ENCODE measurements at regions of chr19 and their contacts with region 1.

Region 1: GRCh38 chr19:41136636-41137455 is 22.6 kb downstream of the CYP2F1 start:
- DNase-seq: no peak
- H3K4me3 ChIP-seq: no peak overlapping the region
- H3K4me3 Mint-ChIP-seq: peak overlapping the region; percentile 55 to 95 (median 80)
- H3K27ac ChIP-seq: no peak overlapping the region
- H3K27ac Mint-ChIP-seq: peak overlapping the region in 1 of 8 donors; percentile 61
- H3K4me1 ChIP-seq: peaks cover 8% of the 10 kb centered on the region
- H3K4me1 Mint-ChIP-seq: peaks cover 8 to 21% (median 19%) of the 10 kb centered on the region in 3 donors
- H3K27me3 ChIP-seq: no peaks in the 10 kb centered on the region
- H3K27me3 Mint-ChIP-seq: peaks cover 0 to 5% of the 10 kb centered on the region in 2 donors

Region 2: DNA sequence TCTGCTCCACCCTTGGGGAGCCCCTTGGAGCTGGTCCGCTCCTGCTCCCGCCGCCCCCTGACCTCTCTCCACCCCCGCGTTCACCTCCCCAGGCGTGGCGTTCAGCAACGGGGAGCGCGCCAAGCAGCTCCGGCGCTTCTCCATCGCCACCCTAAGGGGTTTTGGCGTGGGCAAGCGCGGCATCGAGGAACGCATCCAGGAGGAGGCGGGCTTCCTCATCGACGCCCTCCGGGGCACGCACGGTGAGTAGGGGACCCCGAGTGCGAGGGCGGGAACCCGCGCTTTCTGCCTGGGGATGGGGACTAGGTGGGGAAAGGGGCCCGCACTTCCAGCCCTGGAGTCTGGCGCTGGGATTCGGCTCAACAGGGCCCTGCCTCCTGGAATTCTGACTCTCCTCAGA is 46.9 kb before region 1 on chr19:
- CTCF ChIA-PET with region 1: no interaction called
- POLR2A ChIA-PET with region 1: no interaction called
- DNase-seq: peak in 1 of 5 donors; percentile 9
- H3K4me3 ChIP-seq: no peak overlapping the region
- H3K4me3 Mint-ChIP-seq: peak overlapping the region in 2 of 7 donors; percentile 1 to 8
- H3K27ac ChIP-seq: no peak overlapping the region
- H3K27ac Mint-ChIP-seq: no peak overlapping the region
- H3K4me1 ChIP-seq: no peaks in the 10 kb centered on the region
- H3K4me1 Mint-ChIP-seq: peaks cover 0 to 6% (median 3%) of the 10 kb centered on the region in 3 donors
- H3K27me3 ChIP-seq: peaks cover 13% of the 10 kb centered on the region
- H3K27me3 Mint-ChIP-seq: peaks cover 58 to 94% of the 10 kb centered on the region in 2 donors

Region 3: DNA sequence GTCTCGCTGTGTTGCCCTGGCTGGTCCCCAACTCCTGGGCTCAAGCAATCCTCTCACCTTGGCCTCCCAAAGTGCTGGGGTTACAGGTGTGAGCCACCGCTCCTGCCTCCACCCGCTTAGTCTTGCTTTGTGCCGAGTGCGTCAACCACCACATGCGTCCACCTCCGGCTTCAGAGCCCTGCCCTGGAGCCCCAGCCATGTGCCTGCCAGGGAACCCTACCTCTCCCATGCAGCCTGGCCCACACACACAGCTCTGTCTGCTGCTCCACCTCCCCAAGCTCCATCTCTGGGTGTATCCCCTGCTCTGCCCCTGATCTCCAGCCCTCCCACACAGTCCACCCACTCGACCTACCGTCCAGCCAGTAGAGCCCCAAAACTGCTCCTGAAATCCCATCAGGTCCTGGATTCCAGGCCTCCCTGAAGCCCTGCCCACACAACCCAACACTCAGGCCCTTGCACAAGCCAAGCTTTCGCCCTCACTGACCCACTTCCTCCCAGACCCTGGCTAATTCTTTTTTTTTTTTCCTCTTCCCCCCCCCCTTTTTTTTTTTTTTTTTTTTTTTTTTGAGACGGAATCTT is 13.0 kb before region 1 on chr19:
- CTCF ChIA-PET with region 1: no interaction called
- POLR2A ChIA-PET with region 1: interaction called, 15 read pairs
- DNase-seq: no peak
- H3K4me3 ChIP-seq: no peak overlapping the region
- H3K4me3 Mint-ChIP-seq: peak overlapping the region in 1 of 7 donors; percentile 51
- H3K27ac ChIP-seq: no peak overlapping the region
- H3K27ac Mint-ChIP-seq: peak overlapping the region in 6 of 8 donors; percentile 22 to 94 (median 87)
- H3K4me1 ChIP-seq: peaks cover 26% of the 10 kb centered on the region
- H3K4me1 Mint-ChIP-seq: peaks cover 44 to 55% (median 53%) of the 10 kb centered on the region in 3 donors
- H3K27me3 ChIP-seq: no peaks in the 10 kb centered on the region
- H3K27me3 Mint-ChIP-seq: peaks cover 0 to 3% of the 10 kb centered on the region in 2 donors

Region 4: GRCh38 chr19:41156207-41156606 is 19.4 kb after region 1 on chr19:
- CTCF ChIA-PET with region 1: no interaction called
- POLR2A ChIA-PET with region 1: no interaction called
- DNase-seq: no peak
- H3K4me3 ChIP-seq: no peak overlapping the region
- H3K4me3 Mint-ChIP-seq: no peak overlapping the region
- H3K27ac ChIP-seq: no peak overlapping the region
- H3K27ac Mint-ChIP-seq: no peak overlapping the region
- H3K4me1 ChIP-seq: no peaks in the 10 kb centered on the region
- H3K4me1 Mint-ChIP-seq: no peaks in the 10 kb centered on the region
- H3K27me3 ChIP-seq: no peaks in the 10 kb centered on the region
- H3K27me3 Mint-ChIP-seq: peaks cover 0 to 9% of the 10 kb centered on the region in 2 donors

Measured in CD8-positive, alpha-beta memory T cell (primary cell).